H1 (cell line): ENCODE measurements at regions of chr11 and their contacts with region 1.

Region 1: GRCh38 chr11:8699903-8700302 is 17.3 kb downstream of the RPL27A start:
- DNase-seq: no peak
- H3K4me3 ChIP-seq: no peak overlapping the region
- H3K27ac ChIP-seq: peak overlapping the region; percentile 44; the same call in 1 of the 2 replicates
- H3K4me1 ChIP-seq: peaks cover 15 to 30% (median 20%) of the 10 kb centered on the region in 4 experiments; a peak in 6 of 7 replicates
- H3K27me3 ChIP-seq: no peaks in the 10 kb centered on the region
- CTCF ChIP-seq: no peak
- EP300 ChIP-seq: no peak
- POLR2A ChIP-seq: peak in 1 of 2 experiments; percentile 27; a peak in 2 of 3 replicates
- RAD21 ChIP-seq: no peak

Region 2: DNA sequence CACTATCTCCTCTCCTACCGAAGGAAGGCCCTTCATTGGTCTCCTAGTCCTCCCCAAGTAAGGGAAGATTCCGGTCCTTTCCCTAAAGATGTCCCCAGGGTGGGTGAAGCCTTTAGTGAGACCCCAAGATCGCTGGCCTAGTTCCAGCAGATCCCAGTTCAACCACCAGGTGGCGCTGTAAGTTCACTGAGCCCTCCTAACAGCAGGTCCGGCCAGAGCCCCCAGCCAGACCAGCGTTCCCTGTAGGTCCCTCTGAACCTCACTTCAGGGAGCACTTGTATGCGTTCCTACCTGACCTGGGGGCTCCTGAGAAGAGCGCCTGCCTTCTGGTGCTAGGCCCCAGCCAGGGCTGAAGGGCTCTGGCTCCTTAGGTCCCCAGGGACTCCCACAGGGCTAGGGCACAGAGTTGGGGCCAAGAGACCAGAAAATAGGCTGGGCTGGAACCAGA is 474.3 kb before region 1 on chr11:
- CTCF ChIA-PET with region 1: no interaction called
- POLR2A ChIA-PET with region 1: no interaction called
- DNase-seq: peak; percentile 86 to 98
- H3K4me3 ChIP-seq: no peak overlapping the region
- H3K27ac ChIP-seq: no peak overlapping the region
- H3K4me1 ChIP-seq: peaks cover 0 to 14% (median 3%) of the 10 kb centered on the region in 4 experiments; a peak in 4 of 7 replicates
- H3K27me3 ChIP-seq: no peaks in the 10 kb centered on the region; a peak in 1 of 7 replicates
- CTCF ChIP-seq: peak; percentile 90 to 98 (median 97)
- EP300 ChIP-seq: no peak
- POLR2A ChIP-seq: no peak
- RAD21 ChIP-seq: peak; percentile 98 to 99

Region 3: GRCh38 chr11:8717876-8718753 is 18.2 kb after region 1 on chr11:
- CTCF ChIA-PET with region 1: interaction called, 5 read pairs
- POLR2A ChIA-PET with region 1: interaction called, 21 read pairs
- DNase-seq: no peak
- H3K4me3 ChIP-seq: no peak overlapping the region
- H3K27ac ChIP-seq: peak overlapping the region; percentile 42; the same call in 1 of the 2 replicates
- H3K4me1 ChIP-seq: peaks cover 0 to 14% (median 7%) of the 10 kb centered on the region in 4 experiments; a peak in 4 of 7 replicates
- H3K27me3 ChIP-seq: no peaks in the 10 kb centered on the region
- CTCF ChIP-seq: no peak
- EP300 ChIP-seq: no peak
- POLR2A ChIP-seq: no peak
- RAD21 ChIP-seq: no peak

Region 4: GRCh38 chr11:8776209-8776608 is 76.3 kb after region 1 on chr11:
- CTCF ChIA-PET with region 1: no interaction called
- POLR2A ChIA-PET with region 1: no interaction called
- DNase-seq: no peak
- H3K4me3 ChIP-seq: no peak overlapping the region
- H3K27ac ChIP-seq: no peak overlapping the region
- H3K4me1 ChIP-seq: peaks cover 0 to 5% (median 4%) of the 10 kb centered on the region in 4 experiments; a peak in 2 of 7 replicates
- H3K27me3 ChIP-seq: no peaks in the 10 kb centered on the region
- CTCF ChIP-seq: no peak
- EP300 ChIP-seq: no peak
- POLR2A ChIP-seq: no peak
- RAD21 ChIP-seq: no peak

Region 5: DNA sequence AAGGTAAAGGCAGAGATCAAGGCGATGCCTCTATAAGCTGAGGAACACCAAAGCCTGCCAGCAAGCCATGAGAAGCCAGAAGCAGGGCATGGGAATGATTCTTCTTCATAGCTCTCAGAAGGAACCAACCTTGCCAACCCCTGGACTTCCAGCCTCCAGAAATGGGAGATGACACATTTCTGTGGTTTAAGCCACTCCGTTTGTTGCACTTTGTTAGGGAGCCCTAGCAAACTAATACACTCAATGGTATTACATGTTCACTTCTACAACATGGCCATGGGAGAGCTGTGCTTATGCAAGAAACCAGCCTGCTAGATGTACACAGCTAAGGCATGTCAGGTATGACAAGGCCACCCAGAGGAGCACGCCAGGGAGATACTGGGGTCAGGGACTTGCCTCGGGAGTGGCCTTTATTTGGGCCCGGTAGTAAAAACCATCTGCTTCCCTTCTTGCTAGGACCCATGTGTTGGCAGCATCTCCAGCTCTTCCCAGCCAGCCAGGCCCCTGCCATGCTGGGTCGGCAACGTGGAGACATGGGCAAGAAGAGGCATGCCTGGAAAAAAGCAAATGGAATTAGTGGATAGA is 229.2 kb after region 1 on chr11:
- CTCF ChIA-PET with region 1: no interaction called
- POLR2A ChIA-PET with region 1: no interaction called
- DNase-seq: no peak
- H3K4me3 ChIP-seq: no peak overlapping the region
- H3K27ac ChIP-seq: no peak overlapping the region
- H3K4me1 ChIP-seq: peaks cover 0 to 8% (median 1%) of the 10 kb centered on the region in 4 experiments; a peak in 2 of 7 replicates
- H3K27me3 ChIP-seq: no peaks in the 10 kb centered on the region
- CTCF ChIP-seq: no peak
- EP300 ChIP-seq: no peak
- POLR2A ChIP-seq: no peak
- RAD21 ChIP-seq: no peak